ENCODE measurements at regions of chr9 and their contacts with region 1.

Region 1: DNA sequence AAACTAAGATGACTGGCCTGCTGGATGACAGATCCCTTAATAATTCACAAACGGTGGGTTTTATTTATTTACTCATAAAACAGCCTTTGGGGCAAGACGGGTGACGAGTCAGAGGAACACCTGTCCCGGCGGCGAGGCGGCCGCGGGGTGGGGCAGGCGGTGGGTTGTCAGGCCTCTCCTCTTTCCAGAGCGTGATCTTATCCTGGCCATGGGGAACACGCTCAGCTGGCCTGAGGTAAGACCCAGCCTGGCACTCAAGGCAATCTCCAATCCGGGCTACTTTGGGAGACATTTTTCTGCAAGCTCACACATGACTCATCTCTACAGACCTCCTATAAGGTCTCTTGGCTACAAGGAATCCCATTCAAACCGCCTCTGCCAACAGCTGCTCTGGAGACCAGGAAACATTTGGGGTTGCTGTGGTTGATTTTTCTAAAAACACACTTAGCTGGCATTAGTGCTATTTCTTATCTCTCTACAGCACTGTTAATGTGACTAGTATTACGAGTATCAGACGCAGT is 6.3 kb downstream of the RAPGEF1 start:
- DNase-seq: peak; percentile 74
- H3K4me3 Mint-ChIP-seq: peak overlapping the region; percentile 62
- H3K27ac Mint-ChIP-seq: peak overlapping the region; percentile 93
- H3K4me1 Mint-ChIP-seq: peaks cover 86% of the 10 kb centered on the region
- H3K27me3 Mint-ChIP-seq: no peaks in the 10 kb centered on the region

Region 2: DNA sequence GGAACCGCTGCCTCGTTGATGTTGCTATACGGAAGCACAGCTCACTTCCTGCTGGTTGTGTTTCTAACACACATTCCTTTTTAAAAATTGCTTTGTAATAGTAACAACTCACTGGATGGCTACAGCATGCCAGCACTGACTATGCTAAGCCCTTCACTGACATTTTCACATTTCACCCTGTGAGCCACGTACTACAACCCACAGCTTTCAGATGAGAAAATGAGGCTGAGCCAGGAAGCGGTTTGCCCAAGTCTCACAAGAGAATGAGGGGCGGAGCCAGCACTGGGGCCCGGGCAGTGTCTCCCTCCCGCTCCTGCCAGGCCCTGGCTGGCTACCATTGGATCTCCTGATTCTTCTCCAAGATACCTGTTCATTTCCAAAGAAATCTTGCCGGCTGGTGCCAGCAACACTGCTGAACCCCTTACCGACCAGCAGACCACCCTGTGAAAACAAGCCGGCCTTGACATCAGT is 495.6 kb before region 1 on chr9:
- CTCF ChIA-PET with region 1: no interaction called
- POLR2A ChIA-PET with region 1: no interaction called
- intact Hi-C with region 1: no loop called
- DNase-seq: peak; percentile 93
- H3K4me3 Mint-ChIP-seq: peak overlapping the region; percentile 59
- H3K27ac Mint-ChIP-seq: peak overlapping the region; percentile 94
- H3K4me1 Mint-ChIP-seq: peaks cover 47% of the 10 kb centered on the region
- H3K27me3 Mint-ChIP-seq: no peaks in the 10 kb centered on the region

Region 3: GRCh38 chr9:131393622-131394463 is 339.8 kb before region 1 on chr9 and contains the start of gene PRRC2B:
- CTCF ChIA-PET with region 1: no interaction called
- POLR2A ChIA-PET with region 1: no interaction called
- intact Hi-C with region 1: loop called (anchors 5 kb)
- DNase-seq: peak; percentile 89
- H3K4me3 Mint-ChIP-seq: peak within 1 kb of the TSS; percentile 89
- H3K27ac Mint-ChIP-seq: peak within 1 kb of the TSS; percentile 95
- H3K4me1 Mint-ChIP-seq: peaks cover 43% of the 10 kb centered on the region
- H3K27me3 Mint-ChIP-seq: no peaks in the 10 kb centered on the region
- total RNA-seq, gene PRRC2B: 127 to 135 TPM

Region 4: DNA sequence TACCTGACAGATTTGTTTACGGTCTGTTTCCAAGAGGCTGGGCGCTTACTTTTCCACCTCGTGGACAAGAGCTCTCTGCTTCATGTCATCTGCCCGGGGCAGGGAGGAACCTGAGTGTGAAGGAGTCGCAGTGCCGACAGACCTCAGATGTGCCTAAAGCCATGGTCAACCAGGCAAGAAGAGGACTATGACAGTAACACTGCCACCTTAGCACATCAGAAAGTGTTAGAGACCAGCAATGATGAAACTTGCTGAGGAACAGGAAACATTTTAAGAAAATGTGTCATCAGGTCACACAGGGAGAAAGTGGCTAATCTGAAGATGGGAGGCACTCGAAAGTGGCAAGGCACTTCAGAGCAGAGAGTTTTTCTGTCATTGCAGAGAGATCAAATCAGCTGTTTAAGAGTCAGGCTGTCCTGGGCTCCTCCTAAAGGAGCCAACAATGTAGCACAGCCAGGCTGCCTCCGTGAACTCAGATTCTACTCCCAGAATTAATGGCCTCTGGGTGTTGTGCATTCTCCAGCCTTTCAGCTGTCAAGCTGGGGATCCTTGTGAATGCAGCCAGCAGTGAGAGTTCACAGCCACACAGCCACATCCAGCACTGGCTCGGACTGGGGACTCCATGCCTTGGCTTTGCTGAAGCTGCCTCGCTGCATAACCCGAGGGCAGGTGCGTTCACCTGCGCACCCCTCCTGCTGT is 88.4 kb before region 1 on chr9:
- CTCF ChIA-PET with region 1: interaction called, 31 read pairs
- POLR2A ChIA-PET with region 1: interaction called, 20 read pairs
- intact Hi-C with region 1: no loop called
- DNase-seq: peak; percentile 65
- H3K4me3 Mint-ChIP-seq: peak overlapping the region; percentile 43
- H3K27ac Mint-ChIP-seq: peak overlapping the region; percentile 94
- H3K4me1 Mint-ChIP-seq: peaks cover 68% of the 10 kb centered on the region
- H3K27me3 Mint-ChIP-seq: no peaks in the 10 kb centered on the region

Region 5: GRCh38 chr9:131678499-131679111 is 55.0 kb before region 1 on chr9:
- CTCF ChIA-PET with region 1: interaction called, 60 read pairs
- POLR2A ChIA-PET with region 1: interaction called, 36 read pairs
- intact Hi-C with region 1: loop called (anchors 1 kb)
- DNase-seq: peak; percentile 92
- H3K4me3 Mint-ChIP-seq: peak overlapping the region; percentile 83
- H3K27ac Mint-ChIP-seq: peak overlapping the region; percentile 99
- H3K4me1 Mint-ChIP-seq: peaks cover 92% of the 10 kb centered on the region
- H3K27me3 Mint-ChIP-seq: no peaks in the 10 kb centered on the region

Region 6: DNA sequence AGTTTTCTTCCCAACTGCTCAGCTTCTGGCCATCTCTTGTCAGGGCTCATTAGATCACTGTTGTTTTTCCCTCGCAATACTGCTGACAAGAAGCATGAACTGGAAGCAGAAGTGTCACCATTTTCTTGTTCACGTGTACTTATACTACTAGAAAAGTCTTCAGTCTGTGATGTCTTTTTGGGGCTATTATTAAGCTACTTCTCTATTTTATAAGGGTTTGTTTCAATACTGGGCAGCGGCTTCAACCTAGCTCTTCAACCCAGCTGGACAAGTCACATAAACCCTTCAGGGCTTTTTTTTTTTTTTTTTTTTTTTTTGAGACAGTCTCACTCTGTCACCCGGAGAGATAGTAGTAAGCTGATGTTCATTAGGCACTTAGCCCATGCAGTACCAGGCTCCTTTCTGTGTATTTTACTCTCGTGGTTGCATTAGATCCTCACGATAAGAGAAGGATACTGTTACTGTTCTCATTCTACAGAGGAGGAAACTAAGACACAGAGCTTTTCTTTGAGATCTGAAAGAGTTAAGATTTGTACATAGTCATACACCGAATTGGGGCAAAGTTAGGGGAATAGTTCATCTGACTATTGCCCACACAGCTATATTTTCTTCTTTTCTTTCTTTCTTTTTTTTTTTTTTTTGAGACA is 14.2 kb before region 1 on chr9:
- CTCF ChIA-PET with region 1: interaction called, 9 read pairs
- POLR2A ChIA-PET with region 1: interaction called, 10 read pairs
- intact Hi-C with region 1: loop called (anchors 1 kb)
- DNase-seq: no peak
- H3K4me3 Mint-ChIP-seq: no peak overlapping the region
- H3K27ac Mint-ChIP-seq: peak overlapping the region; percentile 86
- H3K4me1 Mint-ChIP-seq: peaks cover 70% of the 10 kb centered on the region
- H3K27me3 Mint-ChIP-seq: no peaks in the 10 kb centered on the region

Region 7: DNA sequence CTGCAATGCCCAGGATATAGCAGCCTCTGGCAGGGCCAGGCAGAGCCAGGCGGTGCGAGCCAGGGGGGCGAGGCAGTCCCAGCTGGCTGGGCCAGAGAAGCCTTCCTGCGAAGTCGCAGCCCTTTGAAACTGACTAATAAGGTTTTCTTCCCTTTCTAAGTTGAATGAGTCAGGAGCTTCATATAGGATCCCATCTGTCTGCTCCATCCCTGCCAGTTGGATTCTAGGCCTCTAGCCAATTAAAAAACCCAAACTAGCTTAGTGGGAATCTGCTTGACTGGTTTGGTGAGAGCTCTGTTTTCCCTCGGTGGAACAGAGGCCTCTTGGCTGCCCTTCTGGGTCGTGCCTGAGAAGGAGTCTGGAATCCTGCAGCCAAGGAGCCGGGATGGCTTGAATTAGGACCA is 76.3 kb after region 1 on chr9:
- CTCF ChIA-PET with region 1: no interaction called
- POLR2A ChIA-PET with region 1: no interaction called
- intact Hi-C with region 1: no loop called
- DNase-seq: no peak
- H3K4me3 Mint-ChIP-seq: no peak overlapping the region
- H3K27ac Mint-ChIP-seq: no peak overlapping the region
- H3K4me1 Mint-ChIP-seq: no peaks in the 10 kb centered on the region
- H3K27me3 Mint-ChIP-seq: peaks cover 29% of the 10 kb centered on the region

Region 8: DNA sequence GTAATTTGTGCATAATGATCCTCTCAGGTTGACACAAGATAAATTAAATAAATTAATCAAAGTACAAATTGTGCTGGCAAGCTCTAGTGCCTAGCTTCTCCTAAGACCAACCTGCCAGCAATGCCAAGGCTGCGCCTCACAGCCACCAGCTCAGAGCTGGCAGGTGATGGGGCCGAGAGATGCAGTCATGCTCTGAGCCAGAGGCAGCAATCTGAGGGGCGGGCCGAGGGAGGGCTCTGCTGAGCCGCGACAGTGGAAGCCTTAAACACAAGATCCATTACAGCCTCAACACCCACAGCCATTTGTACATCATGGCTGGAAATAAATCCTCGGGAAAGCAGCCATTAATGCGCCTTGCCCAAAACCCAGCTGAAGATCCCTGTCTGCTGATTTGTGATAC is 325.8 kb after region 1 on chr9:
- CTCF ChIA-PET with region 1: no interaction called
- POLR2A ChIA-PET with region 1: no interaction called
- intact Hi-C with region 1: no loop called
- DNase-seq: no peak
- H3K4me3 Mint-ChIP-seq: no peak overlapping the region
- H3K27ac Mint-ChIP-seq: no peak overlapping the region
- H3K4me1 Mint-ChIP-seq: peaks cover 12% of the 10 kb centered on the region
- H3K27me3 Mint-ChIP-seq: no peaks in the 10 kb centered on the region